Naive thymus-derived CD4-positive, alpha-beta T cell (primary cell): ENCODE measurements at regions of chr2 and their contacts with region 1.

Region 1: DNA sequence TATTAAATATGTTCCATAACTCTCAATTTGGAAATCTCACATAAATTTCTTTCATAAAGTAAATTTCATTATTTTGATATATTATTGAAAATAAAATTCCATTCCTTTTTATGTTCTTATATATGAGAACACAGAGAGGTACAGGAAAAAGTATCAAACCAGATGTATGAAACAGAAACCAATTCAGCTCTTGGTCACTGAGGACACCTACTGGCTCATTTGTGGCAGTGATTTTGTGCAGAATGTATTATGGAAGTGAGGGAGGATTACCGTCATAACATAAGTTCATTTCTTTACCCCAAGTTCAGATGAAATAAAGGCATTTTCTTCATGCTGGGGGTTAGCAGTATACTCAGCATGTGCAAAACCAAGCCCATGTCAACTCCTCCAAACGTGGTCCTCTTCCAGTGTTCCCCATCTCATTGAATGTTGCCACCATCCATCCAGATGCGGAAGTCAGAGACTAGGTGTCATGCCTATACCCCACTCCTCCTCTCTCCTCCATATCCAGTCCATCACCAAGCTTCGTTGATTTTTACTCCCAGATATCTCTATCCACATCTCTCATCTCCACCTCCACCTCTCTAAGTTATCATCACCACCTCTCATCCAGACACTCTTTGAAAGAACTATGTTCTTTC is 41.7 kb upstream of the MALL start:
- DNase-seq: peak in 6 of 9 donors; percentile 1 to 25 (median 11)
- ATAC-seq: peak; percentile 54
- H3K4me3 ChIP-seq: no peak overlapping the region
- H3K4me3 Mint-ChIP-seq: peak overlapping the region in 2 of 10 donors; percentile 2 to 4
- H3K27ac ChIP-seq: no peak overlapping the region
- H3K27ac Mint-ChIP-seq: peak overlapping the region in 1 of 9 donors; percentile 13
- H3K4me1 ChIP-seq: no peaks in the 10 kb centered on the region
- H3K4me1 Mint-ChIP-seq: peaks cover 0 to 13% (median 6%) of the 10 kb centered on the region in 7 donors
- H3K27me3 ChIP-seq: no peaks in the 10 kb centered on the region
- H3K27me3 Mint-ChIP-seq: peaks cover 0 to 19% (median under 1%) of the 10 kb centered on the region in 5 donors

Region 2: GRCh38 chr2:110755491-110756078 is 598.3 kb after region 1 on chr2:
- CTCF ChIA-PET with region 1: no interaction called
- POLR2A ChIA-PET with region 1: no interaction called
- intact Hi-C with region 1: loop called in 1 of 2 experiments (anchors 5 kb)
- DNase-seq: peak in 2 of 9 donors; percentile 7 to 18
- ATAC-seq: no peak
- H3K4me3 ChIP-seq: no peak overlapping the region
- H3K4me3 Mint-ChIP-seq: no peak overlapping the region
- H3K27ac ChIP-seq: no peak overlapping the region
- H3K27ac Mint-ChIP-seq: no peak overlapping the region
- H3K4me1 ChIP-seq: no peaks in the 10 kb centered on the region
- H3K4me1 Mint-ChIP-seq: peaks cover 0 to 9% (median 0%) of the 10 kb centered on the region in 7 donors
- H3K27me3 ChIP-seq: no peaks in the 10 kb centered on the region
- H3K27me3 Mint-ChIP-seq: peaks cover 9 to 64% (median 18%) of the 10 kb centered on the region in 5 donors